Activated CD4-positive, alpha-beta T cell treated with anti-CD3 and anti-CD28 coated beads, Interleukin-2, amount 10 ng/mL, durations not matched to agents 24 days and 14 days (primary cell): ENCODE measurements at regions of chr12 and their contacts with region 1.

Region 1: DNA sequence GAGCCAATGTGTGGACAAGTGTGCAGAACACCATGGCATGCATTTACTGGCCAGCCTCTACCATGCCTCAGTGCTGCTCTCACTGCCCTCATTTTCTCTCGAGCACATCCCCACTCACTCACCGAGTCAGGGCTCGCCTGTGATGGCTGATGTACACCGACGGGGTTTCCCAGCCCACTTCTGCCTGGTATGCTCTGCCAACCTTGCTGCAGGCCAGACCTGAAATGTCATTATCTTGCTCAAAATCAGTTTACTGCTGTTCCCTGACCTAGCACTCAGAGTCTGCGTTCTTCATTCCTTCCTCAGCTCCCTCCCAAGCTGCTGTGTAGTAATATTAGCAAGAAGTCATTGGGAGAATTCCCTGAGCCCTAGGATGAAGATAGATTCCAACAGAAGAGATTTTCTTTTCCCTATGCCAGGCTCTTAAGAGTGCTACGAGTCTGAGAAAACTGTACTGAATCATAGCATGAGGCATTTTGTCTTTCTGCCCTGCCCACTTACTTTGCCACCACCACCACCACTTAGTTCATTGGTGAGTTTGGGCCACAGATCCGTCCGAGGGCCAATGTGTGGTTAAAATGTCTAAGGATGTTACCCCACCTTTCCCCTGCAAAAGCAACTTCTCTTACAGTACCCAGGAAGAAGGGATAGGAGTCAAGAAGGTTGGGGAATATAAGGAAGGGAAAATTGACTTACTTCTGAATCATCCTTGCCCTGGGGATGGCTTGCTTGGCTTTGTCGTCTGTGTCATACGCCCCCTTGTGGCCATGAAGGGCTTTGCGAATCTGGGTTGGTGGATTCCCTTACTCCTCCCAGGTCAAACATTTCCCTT is 51.0 kb downstream of the BMAL2 start:
- DNase-seq: peak; percentile 90
- H3K4me3 Mint-ChIP-seq: no peak overlapping the region
- H3K27ac Mint-ChIP-seq: no peak overlapping the region
- H3K4me1 Mint-ChIP-seq: peaks cover 2% of the 10 kb centered on the region
- H3K27me3 Mint-ChIP-seq: no peaks in the 10 kb centered on the region

Region 2: DNA sequence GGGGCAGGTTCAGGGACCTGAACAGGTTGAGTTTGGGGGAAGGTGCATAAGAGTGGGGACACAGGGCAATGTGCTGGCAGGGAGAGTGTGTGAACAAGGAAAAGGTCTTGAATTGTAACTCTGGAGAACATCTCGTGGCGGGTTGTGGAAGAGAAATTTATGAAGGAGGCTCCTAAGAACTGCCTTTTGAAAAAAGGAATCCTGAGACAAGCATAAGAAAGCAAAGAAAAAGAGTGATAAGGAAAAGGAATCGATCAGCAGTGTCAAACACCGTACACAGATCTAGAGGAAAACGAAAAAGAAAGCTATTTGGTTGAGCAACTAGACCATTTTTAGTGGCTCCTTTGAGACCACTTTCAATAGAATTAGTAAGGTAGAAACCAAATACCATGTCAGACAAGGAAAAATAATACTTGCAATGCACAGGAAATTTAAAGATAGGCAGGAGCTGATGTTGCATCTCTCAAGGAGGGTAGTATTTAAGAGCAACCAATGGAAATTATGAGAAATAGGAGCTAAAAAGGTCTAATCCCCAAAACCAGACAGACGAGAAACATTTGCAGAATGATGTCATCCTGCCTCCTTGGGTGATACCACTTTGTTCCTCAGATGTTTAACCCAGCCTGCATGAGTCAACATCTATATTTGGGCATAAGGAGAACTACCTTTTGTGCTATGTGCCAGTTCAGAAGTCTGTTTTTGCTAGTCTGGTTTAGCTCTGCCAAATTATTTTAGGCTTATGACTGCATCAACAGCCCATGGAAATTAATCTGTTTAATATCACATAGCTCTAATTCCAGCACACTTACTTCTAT is 204.0 kb before region 1 on chr12:
- intact Hi-C with region 1: no loop called
- DNase-seq: peak; percentile 80
- H3K4me3 Mint-ChIP-seq: peak overlapping the region; percentile 61
- H3K27ac Mint-ChIP-seq: peak overlapping the region; percentile 87
- H3K4me1 Mint-ChIP-seq: peaks cover 39% of the 10 kb centered on the region
- H3K27me3 Mint-ChIP-seq: no peaks in the 10 kb centered on the region

Region 3: DNA sequence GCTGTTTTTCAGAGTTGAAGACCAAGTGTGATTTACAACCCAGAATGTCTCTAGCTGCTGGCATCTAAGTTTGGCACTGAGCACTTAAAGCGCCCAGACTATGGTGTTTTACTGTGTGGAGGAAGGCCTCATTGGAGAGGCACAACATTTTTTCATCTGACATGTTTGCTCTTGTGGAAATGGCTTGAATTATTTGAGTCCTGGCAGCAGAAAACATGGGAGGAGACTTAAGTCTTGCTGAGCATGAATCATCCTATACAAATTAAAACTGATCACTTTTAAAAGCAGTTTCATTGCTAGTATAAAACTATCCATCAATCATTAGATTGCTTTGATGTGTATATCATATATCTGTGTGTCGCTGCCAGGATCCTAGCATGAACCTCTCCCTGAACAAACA is 226.7 kb after region 1 on chr12:
- intact Hi-C with region 1: no loop called
- DNase-seq: no peak
- H3K4me3 Mint-ChIP-seq: no peak overlapping the region
- H3K27ac Mint-ChIP-seq: no peak overlapping the region
- H3K4me1 Mint-ChIP-seq: no peaks in the 10 kb centered on the region
- H3K27me3 Mint-ChIP-seq: no peaks in the 10 kb centered on the region

Region 4: DNA sequence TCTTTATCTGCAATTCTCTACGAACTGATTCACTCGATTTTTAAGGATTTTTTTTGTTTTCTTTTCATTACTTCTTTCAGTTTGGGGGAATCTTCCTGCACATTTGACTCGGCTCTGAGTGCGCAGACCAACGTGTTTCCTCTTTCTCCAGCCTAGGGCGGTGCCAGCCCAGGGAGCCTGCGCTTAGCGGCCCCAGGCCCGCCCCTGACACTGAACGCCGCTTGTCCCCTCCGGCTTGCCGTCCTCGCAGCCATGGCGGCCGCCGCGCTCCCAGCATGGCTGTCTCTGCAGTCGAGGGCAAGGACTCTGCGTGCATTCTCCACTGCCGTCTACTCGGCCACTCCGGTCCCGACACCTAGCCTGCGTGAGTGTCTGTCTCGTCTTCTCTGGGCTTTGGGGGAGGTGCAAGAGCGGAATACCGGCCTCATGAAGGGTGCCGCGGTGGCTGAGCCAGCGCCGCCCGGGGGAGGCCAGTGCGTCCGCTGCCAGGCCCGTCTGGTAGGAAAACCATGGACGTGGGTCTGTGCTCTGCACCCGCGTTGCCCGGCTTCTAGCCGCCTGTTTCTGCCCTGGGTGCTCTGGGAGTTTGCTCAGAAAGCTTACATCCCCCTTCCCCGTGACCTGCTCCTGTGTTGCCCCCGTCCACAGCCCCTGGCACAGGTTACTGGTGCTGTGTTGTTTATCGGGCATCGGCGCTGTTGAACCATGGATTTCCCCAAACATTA is 327.1 kb after region 1 on chr12 and contains the start of gene MRPS35:
- intact Hi-C with region 1: loop called (anchors 5 kb)
- DNase-seq: peak; percentile 98
- H3K4me3 Mint-ChIP-seq: peak within 1 kb of the TSS; percentile 95
- H3K27ac Mint-ChIP-seq: peak within 1 kb of the TSS; percentile 91
- H3K4me1 Mint-ChIP-seq: peaks cover 31% of the 10 kb centered on the region
- H3K27me3 Mint-ChIP-seq: peaks cover 9% of the 10 kb centered on the region
- total RNA-seq, gene MRPS35: 57.7 and 58.1 TPM in 2 replicates

Region 5: GRCh38 chr12:28699029-28699428 is 1315.4 kb after region 1 on chr12:
- intact Hi-C with region 1: no loop called
- DNase-seq: no peak
- H3K4me3 Mint-ChIP-seq: no peak overlapping the region
- H3K27ac Mint-ChIP-seq: no peak overlapping the region
- H3K4me1 Mint-ChIP-seq: no peaks in the 10 kb centered on the region
- H3K27me3 Mint-ChIP-seq: no peaks in the 10 kb centered on the region